ENCODE measurements at regions of chr19 and their contacts with region 1.

Region 1: GRCh38 chr19:33998739-33999345 is 173.5 kb upstream of the LSM14A start:
- DNase-seq: no peak
- H3K4me3 ChIP-seq: no peak overlapping the region
- H3K27ac ChIP-seq: no peak overlapping the region
- H3K4me1 ChIP-seq: no peaks in the 10 kb centered on the region
- H3K27me3 ChIP-seq: peaks cover 0 to 17% (median 0%) of the 10 kb centered on the region in 7 donors
- CTCF ChIP-seq: peak in 7 of 11 experiments; percentile 21 to 47 (median 38)
- POLR2A ChIP-seq: no peak

Region 2: DNA sequence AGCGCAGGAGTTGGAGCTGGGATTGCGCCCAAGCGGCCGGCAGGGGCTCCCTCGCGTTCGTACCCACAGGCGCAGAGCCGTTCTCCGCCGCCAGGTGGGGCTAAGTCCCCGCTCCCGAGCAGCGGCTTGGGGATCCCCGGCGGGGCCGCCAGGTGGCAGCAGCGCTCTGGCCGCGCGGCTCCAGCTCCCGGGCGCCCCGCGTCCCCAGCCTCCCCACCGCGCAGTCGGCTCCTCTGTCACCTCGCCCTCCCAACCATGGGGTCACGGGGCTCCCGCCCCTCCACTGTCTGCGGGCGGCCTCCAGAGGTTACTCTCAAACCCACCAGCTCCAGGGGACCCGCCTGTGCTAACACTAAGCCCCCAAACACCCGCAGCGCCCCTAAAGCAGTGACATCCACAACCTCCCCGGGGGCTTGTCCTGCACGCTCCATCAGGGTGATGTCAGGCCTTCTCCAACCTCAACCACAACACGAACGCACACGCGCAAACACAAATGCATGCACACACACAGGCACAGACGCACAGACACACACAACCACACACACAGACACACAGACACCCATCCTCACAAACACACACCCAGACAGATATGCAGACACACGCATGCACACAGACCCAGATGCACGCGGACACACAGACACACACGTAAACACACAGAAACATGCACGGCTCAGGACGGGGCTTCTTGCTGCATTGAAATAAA is 220.6 kb before region 1 on chr19:
- intact Hi-C with region 1: loop called (anchors 2 kb)
- DNase-seq: peak; percentile 97
- H3K4me3 ChIP-seq: peak overlapping the region in 5 of 8 donors; percentile 7 to 54 (median 10)
- H3K27ac ChIP-seq: no peak overlapping the region
- H3K4me1 ChIP-seq: peaks cover 0 to 43% (median 23%) of the 10 kb centered on the region in 6 donors
- H3K27me3 ChIP-seq: peaks cover 0 to 42% (median 0%) of the 10 kb centered on the region in 7 donors
- CTCF ChIP-seq: peak; percentile 98 to 100 (median 100)
- POLR2A ChIP-seq: no peak

Region 3: GRCh38 chr19:33794683-33795369 is 204.0 kb before region 1 on chr19:
- intact Hi-C with region 1: loop called (anchors 5 kb)
- DNase-seq: no peak
- H3K4me3 ChIP-seq: peak overlapping the region; percentile 64 to 90 (median 74)
- H3K27ac ChIP-seq: peak overlapping the region; percentile 85 to 94 (median 92)
- H3K4me1 ChIP-seq: peaks cover 7 to 65% (median 47%) of the 10 kb centered on the region in 6 donors
- H3K27me3 ChIP-seq: peaks cover 0 to 94% (median 31%) of the 10 kb centered on the region in 7 donors
- CTCF ChIP-seq: peak in 2 of 11 experiments; percentile 64 to 74
- POLR2A ChIP-seq: no peak

Region 4: GRCh38 chr19:34217952-34218817 is 219.3 kb after region 1 on chr19:
- intact Hi-C with region 1: no loop called
- DNase-seq: no peak
- H3K4me3 ChIP-seq: no peak overlapping the region
- H3K27ac ChIP-seq: peak overlapping the region in 6 of 8 donors; percentile 10 to 67 (median 40)
- H3K4me1 ChIP-seq: peaks cover 14 to 45% (median 24%) of the 10 kb centered on the region in 6 donors
- H3K27me3 ChIP-seq: no peaks in the 10 kb centered on the region
- CTCF ChIP-seq: no peak
- POLR2A ChIP-seq: no peak